H1 (cell line): ENCODE measurements at regions of chr12 and their contacts with region 1.

Region 1: GRCh38 chr12:5952031-5952430 is 7.0 kb upstream of the ANO2 start:
- DNase-seq: no peak
- H3K4me3 ChIP-seq: no peak overlapping the region
- H3K27ac ChIP-seq: no peak overlapping the region
- H3K4me1 ChIP-seq: no peaks in the 10 kb centered on the region
- H3K27me3 ChIP-seq: peaks cover 0 to 1% (median under 1%) of the 10 kb centered on the region in 4 experiments; a peak in 3 of 7 replicates
- CTCF ChIP-seq: no peak
- EP300 ChIP-seq: no peak
- POLR2A ChIP-seq: no peak
- RAD21 ChIP-seq: no peak

Region 2: GRCh38 chr12:5808981-5809380 is 143.1 kb before region 1 on chr12:
- CTCF ChIA-PET with region 1: no interaction called
- POLR2A ChIA-PET with region 1: no interaction called
- DNase-seq: no peak
- H3K4me3 ChIP-seq: no peak overlapping the region
- H3K27ac ChIP-seq: no peak overlapping the region
- H3K4me1 ChIP-seq: no peaks in the 10 kb centered on the region; a peak in 1 of 7 replicates
- H3K27me3 ChIP-seq: no peaks in the 10 kb centered on the region
- CTCF ChIP-seq: no peak
- EP300 ChIP-seq: no peak
- POLR2A ChIP-seq: no peak
- RAD21 ChIP-seq: no peak

Region 3: GRCh38 chr12:5965950-5966383 is 13.9 kb after region 1 on chr12:
- CTCF ChIA-PET with region 1: interaction called, 10 read pairs
- POLR2A ChIA-PET with region 1: interaction called, 3 read pairs
- DNase-seq: peak in 1 of 2 experiments; percentile 81
- H3K4me3 ChIP-seq: no peak overlapping the region
- H3K27ac ChIP-seq: no peak overlapping the region
- H3K4me1 ChIP-seq: peaks cover 5 to 14% (median 12%) of the 10 kb centered on the region in 4 experiments; a peak in 6 of 7 replicates
- H3K27me3 ChIP-seq: 0 out of 7 replicates have a peak, but pooled peaks cover 0 to 3% (median 0%) of the 10 kb centered on the region in 4 experiments
- CTCF ChIP-seq: peak; percentile 84 to 90 (median 88)
- EP300 ChIP-seq: no peak
- POLR2A ChIP-seq: no peak
- RAD21 ChIP-seq: peak; percentile 51 to 63

Region 4: GRCh38 chr12:6046511-6047180 is 94.6 kb after region 1 on chr12:
- CTCF ChIA-PET with region 1: no interaction called
- POLR2A ChIA-PET with region 1: no interaction called
- DNase-seq: no peak
- H3K4me3 ChIP-seq: no peak overlapping the region
- H3K27ac ChIP-seq: no peak overlapping the region
- H3K4me1 ChIP-seq: no peaks in the 10 kb centered on the region
- H3K27me3 ChIP-seq: no peaks in the 10 kb centered on the region
- CTCF ChIP-seq: no peak
- EP300 ChIP-seq: no peak
- POLR2A ChIP-seq: no peak
- RAD21 ChIP-seq: no peak